CD4-positive, alpha-beta memory T cell (primary cell): ENCODE measurements at regions of chr1 and their contacts with region 1.

Region 1: DNA sequence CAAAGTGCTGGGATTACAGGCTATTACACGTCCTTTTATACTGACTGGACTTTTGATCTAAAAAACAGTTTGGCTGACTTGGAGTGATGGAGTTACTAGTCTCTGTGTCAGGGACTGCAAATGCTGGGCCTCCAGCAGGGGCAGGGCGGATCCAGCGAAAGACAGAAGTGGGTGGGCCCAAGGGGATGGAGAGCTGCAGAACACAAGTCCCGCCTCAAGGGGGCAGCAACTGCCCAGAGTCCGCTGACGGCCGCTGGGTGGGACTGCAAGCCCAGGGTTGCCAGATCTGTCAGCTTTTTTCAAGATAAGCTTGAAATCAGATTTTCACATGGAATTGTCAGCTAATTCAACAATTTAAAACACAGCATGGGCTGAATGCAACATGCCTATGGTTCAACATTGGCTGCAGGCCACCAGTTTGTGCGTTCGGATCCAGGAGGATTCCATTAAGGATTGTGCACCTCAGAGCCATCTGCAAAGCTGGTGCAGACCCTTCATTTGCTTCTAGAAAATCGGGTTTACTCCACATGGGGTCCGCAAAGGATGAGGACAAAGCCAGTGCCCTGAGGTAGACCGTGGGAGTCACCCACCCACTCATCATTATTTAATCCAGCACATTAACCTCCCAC is 10.7 kb downstream of the STMN1 start:
- DNase-seq: peak; percentile 89 to 92 (median 91)
- H3K4me3 ChIP-seq: no peak overlapping the region
- H3K4me3 Mint-ChIP-seq: peak overlapping the region in 1 of 8 donors; percentile 23
- H3K27ac ChIP-seq: no peak overlapping the region
- H3K27ac Mint-ChIP-seq: peak overlapping the region in 6 of 7 donors; percentile 4 to 73 (median 58)
- H3K4me1 ChIP-seq: peaks cover 10% of the 10 kb centered on the region
- H3K4me1 Mint-ChIP-seq: peaks cover 4 to 9% (median 7%) of the 10 kb centered on the region in 4 donors
- H3K27me3 ChIP-seq: no peaks in the 10 kb centered on the region
- H3K27me3 Mint-ChIP-seq: no peaks in the 10 kb centered on the region

Region 2: GRCh38 chr1:25520446-25521061 is 374.9 kb before region 1 on chr1:
- CTCF ChIA-PET with region 1: no interaction called
- POLR2A ChIA-PET with region 1: no interaction called
- intact Hi-C with region 1: no loop called
- DNase-seq: peak; percentile 61 to 66 (median 62)
- H3K4me3 ChIP-seq: no peak overlapping the region
- H3K4me3 Mint-ChIP-seq: no peak overlapping the region
- H3K27ac ChIP-seq: no peak overlapping the region
- H3K27ac Mint-ChIP-seq: peak overlapping the region in 5 of 7 donors; percentile 68 to 84 (median 78)
- H3K4me1 ChIP-seq: peaks cover 5% of the 10 kb centered on the region
- H3K4me1 Mint-ChIP-seq: peaks cover 6 to 10% (median 8%) of the 10 kb centered on the region in 4 donors
- H3K27me3 ChIP-seq: no peaks in the 10 kb centered on the region
- H3K27me3 Mint-ChIP-seq: peaks cover 0 to 2% of the 10 kb centered on the region in 2 donors

Region 3: GRCh38 chr1:25880996-25881650 is 14.4 kb before region 1 on chr1:
- CTCF ChIA-PET with region 1: interaction called, 13 read pairs
- POLR2A ChIA-PET with region 1: no interaction called
- intact Hi-C with region 1: no loop called
- DNase-seq: no peak
- H3K4me3 ChIP-seq: no peak overlapping the region
- H3K4me3 Mint-ChIP-seq: no peak overlapping the region
- H3K27ac ChIP-seq: no peak overlapping the region
- H3K27ac Mint-ChIP-seq: no peak overlapping the region
- H3K4me1 ChIP-seq: no peaks in the 10 kb centered on the region
- H3K4me1 Mint-ChIP-seq: peaks cover 0 to 4% (median 2%) of the 10 kb centered on the region in 4 donors
- H3K27me3 ChIP-seq: no peaks in the 10 kb centered on the region
- H3K27me3 Mint-ChIP-seq: no peaks in the 10 kb centered on the region

Region 4: GRCh38 chr1:25922056-25922969 is 26.8 kb after region 1 on chr1:
- CTCF ChIA-PET with region 1: interaction called, 22 read pairs
- POLR2A ChIA-PET with region 1: interaction called, 10 read pairs
- intact Hi-C with region 1: no loop called
- DNase-seq: peak; percentile 46 to 60 (median 57)
- H3K4me3 ChIP-seq: peak overlapping the region; percentile 17 to 54
- H3K4me3 Mint-ChIP-seq: peak overlapping the region; percentile 85 to 92 (median 88)
- H3K27ac ChIP-seq: no peak overlapping the region
- H3K27ac Mint-ChIP-seq: peak overlapping the region; percentile 49 to 90 (median 65)
- H3K4me1 ChIP-seq: peaks cover 36% of the 10 kb centered on the region
- H3K4me1 Mint-ChIP-seq: peaks cover 19 to 33% (median 23%) of the 10 kb centered on the region in 4 donors
- H3K27me3 ChIP-seq: no peaks in the 10 kb centered on the region
- H3K27me3 Mint-ChIP-seq: peaks cover 2 to 3% of the 10 kb centered on the region in 2 donors

Region 5: GRCh38 chr1:25990702-25991395 is 95.4 kb after region 1 on chr1:
- CTCF ChIA-PET with region 1: interaction called, 583 read pairs
- POLR2A ChIA-PET with region 1: interaction called, 71 read pairs
- intact Hi-C with region 1: no loop called
- DNase-seq: peak; percentile 36 to 50 (median 44)
- H3K4me3 ChIP-seq: peak overlapping the region; percentile 26 to 62
- H3K4me3 Mint-ChIP-seq: peak overlapping the region; percentile 79 to 92 (median 86)
- H3K27ac ChIP-seq: peak overlapping the region; percentile 67
- H3K27ac Mint-ChIP-seq: peak overlapping the region; percentile 71 to 97 (median 85)
- H3K4me1 ChIP-seq: peaks cover 46% of the 10 kb centered on the region
- H3K4me1 Mint-ChIP-seq: peaks cover 29 to 57% (median 45%) of the 10 kb centered on the region in 4 donors
- H3K27me3 ChIP-seq: no peaks in the 10 kb centered on the region
- H3K27me3 Mint-ChIP-seq: no peaks in the 10 kb centered on the region

Region 6: DNA sequence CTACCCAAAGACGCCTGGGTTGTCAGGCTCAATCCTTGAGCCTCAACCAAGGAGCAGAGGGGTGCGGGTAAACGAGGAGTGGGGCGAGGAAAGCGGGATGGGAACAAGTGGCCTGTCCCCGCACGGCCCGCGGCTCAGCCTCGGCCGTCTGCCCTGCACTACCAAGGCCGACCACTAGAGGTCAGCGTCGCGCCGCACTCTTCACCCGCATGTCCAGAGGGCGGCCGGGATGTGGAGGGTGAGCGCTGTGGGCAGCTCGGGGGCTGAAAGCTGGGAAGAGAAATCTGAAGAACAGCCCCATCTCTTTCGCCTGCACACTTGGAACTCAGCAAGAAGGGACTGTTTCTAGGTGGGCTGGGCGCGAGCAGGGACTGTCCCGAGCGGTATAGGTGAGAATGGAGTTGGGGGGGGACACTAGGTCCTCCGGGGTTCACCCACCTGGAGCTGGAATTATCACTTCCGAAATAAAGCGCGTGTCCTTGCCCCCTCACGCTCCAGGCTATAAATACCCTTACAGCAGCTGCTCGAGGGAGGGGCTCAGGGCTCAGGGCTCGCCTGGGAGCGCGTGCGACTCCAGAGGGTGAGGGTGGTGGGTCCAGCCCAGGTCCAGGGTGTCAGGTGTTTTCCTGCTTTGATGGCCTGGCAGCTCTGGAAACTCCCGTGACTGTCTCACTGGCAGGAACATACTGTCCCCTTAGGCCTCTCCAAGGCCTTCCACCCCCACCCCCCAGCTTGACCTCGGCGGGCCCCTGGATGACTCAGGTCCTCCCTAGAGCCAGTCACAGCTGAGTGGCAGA is 140.7 kb after region 1 on chr1:
- CTCF ChIA-PET with region 1: interaction called, 6 read pairs
- POLR2A ChIA-PET with region 1: no interaction called
- intact Hi-C with region 1: loop called (anchors 1 kb)
- DNase-seq: peak; percentile 67 to 81 (median 69)
- H3K4me3 ChIP-seq: peak overlapping the region; percentile 48 to 84
- H3K4me3 Mint-ChIP-seq: peak overlapping the region; percentile 94 to 99 (median 95)
- H3K27ac ChIP-seq: peak overlapping the region; percentile 77
- H3K27ac Mint-ChIP-seq: peak overlapping the region; percentile 89 to 97 (median 95)
- H3K4me1 ChIP-seq: peaks cover 15% of the 10 kb centered on the region
- H3K4me1 Mint-ChIP-seq: peaks cover 2 to 21% (median 11%) of the 10 kb centered on the region in 4 donors
- H3K27me3 ChIP-seq: no peaks in the 10 kb centered on the region
- H3K27me3 Mint-ChIP-seq: peaks cover 2 to 3% of the 10 kb centered on the region in 2 donors